ENCODE measurements at regions of chr13 and their contacts with region 1.

Region 1: DNA sequence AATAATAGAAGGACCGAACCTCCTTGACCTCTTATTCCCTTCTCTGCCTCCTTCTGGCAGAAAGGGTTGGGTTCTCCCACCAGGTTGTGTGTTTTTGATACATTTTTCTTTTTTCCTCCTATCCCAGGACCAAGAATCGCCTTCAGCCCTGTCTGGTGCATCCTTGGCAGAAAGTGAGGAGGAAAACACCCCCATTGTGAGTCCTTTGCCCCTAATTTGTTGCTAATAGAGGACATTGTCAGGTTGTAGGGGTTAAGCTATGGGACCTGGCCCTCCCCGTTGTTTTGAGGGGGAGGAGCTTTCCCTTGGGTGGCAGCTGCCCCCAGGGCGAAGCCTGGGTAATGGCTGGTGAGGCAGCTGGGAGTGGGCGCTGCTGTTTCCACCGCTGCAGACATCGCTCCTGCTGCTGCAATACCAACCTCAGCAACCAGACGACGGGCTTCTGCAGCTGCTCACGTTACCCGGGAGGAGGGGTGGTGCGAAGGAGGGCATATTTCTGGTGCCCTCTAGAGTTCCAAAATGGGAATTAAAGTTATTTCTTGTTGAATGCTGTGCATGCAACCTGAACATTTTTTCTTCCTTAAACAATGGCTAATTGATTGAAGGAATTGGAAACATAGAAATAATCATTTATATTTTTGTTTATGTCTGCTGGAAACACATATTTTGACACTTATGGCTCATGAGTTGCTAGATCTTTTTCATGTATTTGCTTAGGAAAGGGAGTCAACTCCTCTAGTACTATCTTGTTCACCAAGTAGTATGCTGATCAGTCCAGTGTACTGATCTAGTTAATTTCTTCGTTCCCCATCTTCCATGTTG is 1.5 kb downstream of the ZMYM2 start:
- DNase-seq: peak; percentile 92
- H3K4me3 Mint-ChIP-seq: peak overlapping the region; percentile 95
- H3K27ac Mint-ChIP-seq: peak overlapping the region; percentile 96
- H3K4me1 Mint-ChIP-seq: peaks cover 30% of the 10 kb centered on the region
- H3K27me3 Mint-ChIP-seq: no peaks in the 10 kb centered on the region

Region 2: DNA sequence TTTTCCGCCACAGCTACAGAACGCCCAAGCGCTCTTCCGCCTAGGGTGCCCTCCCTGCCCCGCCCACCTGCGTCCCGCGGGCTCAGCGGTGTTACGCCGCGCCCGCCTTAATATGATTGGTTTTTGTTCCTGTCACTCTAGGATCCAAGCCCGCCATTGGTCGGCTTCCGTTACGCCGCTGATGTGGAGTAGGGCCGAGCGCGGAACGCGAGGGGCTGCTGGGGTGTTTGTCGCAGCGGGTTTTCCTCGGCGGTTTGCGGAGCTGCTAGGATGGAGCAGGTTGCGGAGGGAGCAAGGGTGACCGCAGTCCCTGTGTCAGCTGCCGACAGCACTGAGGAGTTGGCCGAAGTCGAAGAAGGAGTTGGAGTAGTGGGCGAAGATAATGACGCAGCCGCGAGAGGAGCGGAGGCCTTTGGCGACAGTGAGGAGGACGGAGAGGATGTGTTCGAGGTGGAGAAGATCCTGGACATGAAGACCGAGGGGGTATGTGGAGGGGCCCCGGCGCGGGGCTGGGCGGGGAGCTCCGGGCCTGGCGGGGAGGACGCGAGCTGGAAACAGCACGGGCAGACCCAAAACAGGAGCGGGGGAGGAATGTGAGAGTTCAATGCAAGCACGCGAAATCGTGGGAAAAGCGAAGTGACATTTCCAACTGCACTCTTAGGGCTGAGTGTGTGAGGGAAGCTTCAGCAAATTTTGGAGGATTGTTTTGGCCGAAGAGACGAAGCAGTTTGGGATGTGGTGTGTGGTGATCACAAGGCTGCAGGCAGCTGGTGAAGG is 326.4 kb before region 1 on chr13 and contains the start of gene MPHOSPH8:
- CTCF ChIA-PET with region 1: no interaction called
- intact Hi-C with region 1: loop called (anchors 1 kb)
- DNase-seq: peak; percentile 94
- H3K4me3 Mint-ChIP-seq: peak within 1 kb of the TSS; percentile 100
- H3K27ac Mint-ChIP-seq: peak within 1 kb of the TSS; percentile 98
- H3K4me1 Mint-ChIP-seq: peaks cover 32% of the 10 kb centered on the region
- H3K27me3 Mint-ChIP-seq: no peaks in the 10 kb centered on the region
- total RNA-seq, gene MPHOSPH8: 20.6 to 21.5 TPM

Region 3: GRCh38 chr13:19863323-19864023 is 96.6 kb before region 1 on chr13 and contains the start of gene ZMYM5:
- CTCF ChIA-PET with region 1: interaction called, 5 read pairs
- intact Hi-C with region 1: loop called (anchors 1 kb)
- DNase-seq: peak; percentile 98
- H3K4me3 Mint-ChIP-seq: peak within 1 kb of the TSS; percentile 94
- H3K27ac Mint-ChIP-seq: peak within 1 kb of the TSS; percentile 95
- H3K4me1 Mint-ChIP-seq: peaks cover 37% of the 10 kb centered on the region
- H3K27me3 Mint-ChIP-seq: no peaks in the 10 kb centered on the region
- total RNA-seq, gene ZMYM5: 8.1 to 8.5 TPM

Region 4: DNA sequence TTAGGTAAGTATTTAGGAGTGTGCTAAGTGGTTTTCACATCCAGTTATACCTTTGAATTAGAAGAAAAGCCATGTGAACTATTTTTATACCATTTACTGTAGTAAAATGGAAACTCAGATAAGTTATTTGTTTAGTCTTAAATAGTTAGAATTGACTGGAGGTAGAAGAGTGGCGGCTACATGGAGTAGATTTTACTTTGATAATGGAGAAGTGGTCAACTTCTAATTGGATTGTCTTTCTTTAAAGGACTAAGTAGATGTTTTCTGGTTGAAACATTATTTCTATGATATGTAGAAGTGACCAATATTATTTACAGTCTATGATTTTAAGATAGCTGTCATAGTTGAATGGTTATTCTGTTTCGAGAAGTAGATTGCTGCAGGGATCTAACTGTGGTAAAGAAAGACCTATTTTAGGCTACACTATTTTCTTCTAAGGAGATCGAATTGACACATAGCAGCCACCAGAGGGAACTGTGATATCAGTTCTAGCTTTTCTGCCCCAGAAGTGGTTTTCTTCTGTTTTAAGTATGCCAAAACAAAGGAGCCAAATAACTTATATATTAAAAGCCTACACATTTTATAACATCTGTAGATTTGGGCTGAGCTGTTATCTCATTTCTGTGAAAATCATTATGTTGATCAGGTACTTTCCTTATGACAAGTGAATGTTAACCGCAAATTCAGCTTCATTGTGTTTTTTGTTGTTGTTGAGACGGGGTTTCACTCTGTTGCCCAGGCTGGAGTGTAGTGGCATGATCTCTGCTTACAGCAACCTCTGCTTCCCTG is 24.6 kb after region 1 on chr13:
- CTCF ChIA-PET with region 1: interaction called, 9 read pairs
- intact Hi-C with region 1: loop called (anchors 1 kb)
- DNase-seq: no peak
- H3K4me3 Mint-ChIP-seq: no peak overlapping the region
- H3K27ac Mint-ChIP-seq: no peak overlapping the region
- H3K4me1 Mint-ChIP-seq: peaks cover 35% of the 10 kb centered on the region
- H3K27me3 Mint-ChIP-seq: no peaks in the 10 kb centered on the region

Region 5: GRCh38 chr13:20525690-20526544 is 565.9 kb after region 1 on chr13 and contains the start of gene CRYL1:
- CTCF ChIA-PET with region 1: no interaction called
- intact Hi-C with region 1: loop called (anchors 5 kb)
- DNase-seq: peak; percentile 76
- H3K4me3 Mint-ChIP-seq: peak within 1 kb of the TSS; percentile 83
- H3K27ac Mint-ChIP-seq: peak within 1 kb of the TSS; percentile 83
- H3K4me1 Mint-ChIP-seq: peaks cover 32% of the 10 kb centered on the region
- H3K27me3 Mint-ChIP-seq: no peaks in the 10 kb centered on the region
- total RNA-seq, gene CRYL1: 8.9 to 9.3 TPM